Activated CD4-positive, alpha-beta T cell treated with anti-CD3 and anti-CD28 coated beads, Interleukin-2, amount 10 ng/mL, durations not matched to agents 24 days and 14 days (primary cell): ENCODE measurements at regions of chr21 and their contacts with region 1.

Region 1: GRCh38 chr21:35138665-35139381 is 89.7 kb upstream of the RUNX1 start:
- DNase-seq: peak; percentile 68
- H3K4me3 Mint-ChIP-seq: peak overlapping the region; percentile 74
- H3K27ac Mint-ChIP-seq: peak overlapping the region; percentile 97
- H3K4me1 Mint-ChIP-seq: peaks cover 30% of the 10 kb centered on the region
- H3K27me3 Mint-ChIP-seq: no peaks in the 10 kb centered on the region

Region 2: GRCh38 chr21:34974162-34974981 is 164.5 kb before region 1 on chr21:
- intact Hi-C with region 1: no loop called
- DNase-seq: peak; percentile 90
- H3K4me3 Mint-ChIP-seq: peak overlapping the region; percentile 83
- H3K27ac Mint-ChIP-seq: peak overlapping the region; percentile 86
- H3K4me1 Mint-ChIP-seq: peaks cover 68% of the 10 kb centered on the region
- H3K27me3 Mint-ChIP-seq: peaks cover 26% of the 10 kb centered on the region

Region 3: GRCh38 chr21:35113064-35113463 is 25.8 kb before region 1 on chr21:
- intact Hi-C with region 1: loop called (anchors 2 kb)
- DNase-seq: no peak
- H3K4me3 Mint-ChIP-seq: no peak overlapping the region
- H3K27ac Mint-ChIP-seq: peak overlapping the region; percentile 23
- H3K4me1 Mint-ChIP-seq: peaks cover 7% of the 10 kb centered on the region
- H3K27me3 Mint-ChIP-seq: no peaks in the 10 kb centered on the region

Region 4: DNA sequence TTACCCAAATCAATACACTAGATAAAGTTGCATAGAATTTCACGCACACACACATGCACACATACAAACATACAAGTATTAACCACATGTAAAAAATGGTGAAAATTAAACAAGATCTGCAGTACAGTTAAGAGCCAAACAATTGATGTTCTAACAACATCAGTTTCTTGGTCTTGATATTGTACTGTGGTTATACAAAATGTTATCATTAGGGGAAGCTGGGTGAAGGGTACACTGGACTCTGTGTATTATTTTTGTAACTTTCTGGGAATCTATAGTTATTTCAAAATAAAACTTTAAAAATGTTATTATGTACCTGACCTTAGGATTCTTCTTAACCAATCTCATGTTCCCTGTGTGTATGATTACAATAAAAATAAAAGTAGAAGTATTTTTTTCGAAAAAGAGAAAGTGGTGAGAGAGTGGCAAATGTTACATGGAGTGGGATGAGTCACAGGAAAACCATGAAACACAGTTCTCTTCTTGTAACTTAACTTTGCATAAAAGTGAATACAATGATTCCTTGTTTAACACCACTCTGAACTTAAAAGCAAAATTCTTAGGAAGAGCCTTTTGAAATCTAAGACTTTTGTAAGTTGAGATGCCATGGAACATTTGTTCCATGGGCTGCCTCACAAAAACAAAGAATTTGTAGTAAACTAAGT is 11.9 kb after region 1 on chr21:
- intact Hi-C with region 1: loop called (anchors 1 kb)
- DNase-seq: no peak
- H3K4me3 Mint-ChIP-seq: peak overlapping the region; percentile 48
- H3K27ac Mint-ChIP-seq: peak overlapping the region; percentile 92
- H3K4me1 Mint-ChIP-seq: peaks cover 33% of the 10 kb centered on the region
- H3K27me3 Mint-ChIP-seq: no peaks in the 10 kb centered on the region

Region 5: GRCh38 chr21:35172231-35172630 is 33.4 kb after region 1 on chr21:
- intact Hi-C with region 1: no loop called
- DNase-seq: peak; percentile 76
- H3K4me3 Mint-ChIP-seq: no peak overlapping the region
- H3K27ac Mint-ChIP-seq: peak overlapping the region; percentile 8
- H3K4me1 Mint-ChIP-seq: peaks cover 30% of the 10 kb centered on the region
- H3K27me3 Mint-ChIP-seq: no peaks in the 10 kb centered on the region

Region 6: GRCh38 chr21:35189077-35189863 is 50.4 kb after region 1 on chr21:
- intact Hi-C with region 1: no loop called
- DNase-seq: no peak
- H3K4me3 Mint-ChIP-seq: no peak overlapping the region
- H3K27ac Mint-ChIP-seq: peak overlapping the region; percentile 17
- H3K4me1 Mint-ChIP-seq: peaks cover 6% of the 10 kb centered on the region
- H3K27me3 Mint-ChIP-seq: peaks cover 3% of the 10 kb centered on the region

Region 7: GRCh38 chr21:35226948-35227744 is 88.3 kb after region 1 on chr21:
- intact Hi-C with region 1: loop called (anchors 5 kb)
- DNase-seq: peak; percentile 85
- H3K4me3 Mint-ChIP-seq: peak overlapping the region; percentile 46
- H3K27ac Mint-ChIP-seq: peak overlapping the region; percentile 70
- H3K4me1 Mint-ChIP-seq: peaks cover 30% of the 10 kb centered on the region
- H3K27me3 Mint-ChIP-seq: no peaks in the 10 kb centered on the region

Region 8: GRCh38 chr21:35256467-35256988 is 117.7 kb after region 1 on chr21:
- intact Hi-C with region 1: loop called (anchors 2 kb)
- DNase-seq: no peak
- H3K4me3 Mint-ChIP-seq: no peak overlapping the region
- H3K27ac Mint-ChIP-seq: peak overlapping the region; percentile 12
- H3K4me1 Mint-ChIP-seq: no peaks in the 10 kb centered on the region
- H3K27me3 Mint-ChIP-seq: no peaks in the 10 kb centered on the region